Activated T-helper 1 cell treated with anti-CD3 and anti-CD28 coated beads, Interleukin-12 subunit alpha, Interleukin-12 subunit beta, Interleukin-2, Interleukin-4 antibody, amounts not matched to agents 30 ng/mL and 10 ng/mL and 1 ng/mL, durations not matched to agents 14 hours and 24 hours and 36 hours (primary cell): ENCODE measurements at regions of chr12 and their contacts with region 1.

Region 1: GRCh38 chr12:25591144-25591543 is 38.1 kb upstream of the LMNTD1 start:
- DNase-seq: no peak
- H3K4me3 Mint-ChIP-seq: no peak overlapping the region
- H3K27ac Mint-ChIP-seq: peak overlapping the region; percentile 24
- H3K4me1 Mint-ChIP-seq: peaks cover 58% of the 10 kb centered on the region
- H3K27me3 Mint-ChIP-seq: no peaks in the 10 kb centered on the region

Region 2: DNA sequence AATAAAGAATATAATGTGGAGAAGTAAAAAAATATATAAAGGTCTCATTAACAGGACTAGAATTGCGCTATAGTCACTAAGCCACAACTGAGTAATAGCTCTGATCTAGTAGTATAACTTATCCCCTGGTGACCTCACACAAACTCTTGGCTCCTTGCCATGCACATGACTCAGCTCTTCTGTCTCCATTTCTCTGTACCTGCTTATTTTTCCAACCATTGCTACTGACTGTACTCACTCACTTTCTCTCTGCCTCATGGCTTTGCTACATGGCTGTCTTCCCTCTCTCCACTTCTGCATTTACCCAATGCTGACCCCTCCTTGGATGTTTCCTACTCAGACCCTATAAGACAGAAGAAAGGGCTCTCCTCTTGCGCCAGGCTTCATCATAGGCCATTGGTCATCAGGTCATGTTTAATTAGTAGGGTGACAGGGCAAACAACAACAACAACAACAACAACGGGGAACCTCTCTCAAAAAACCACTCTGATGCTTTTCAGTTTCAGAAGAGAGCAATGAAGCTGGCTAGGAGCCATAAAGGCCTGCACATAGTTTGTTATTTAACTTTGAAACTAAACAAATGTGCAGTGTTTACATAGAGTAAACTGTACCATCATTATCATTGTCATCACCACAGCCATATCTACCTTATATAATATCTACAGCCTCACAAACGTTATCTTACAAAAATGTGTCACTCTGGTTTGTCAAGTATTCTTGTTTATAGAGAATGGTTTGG is 314.8 kb before region 1 on chr12:
- intact Hi-C with region 1: no loop called
- DNase-seq: no peak
- H3K4me3 Mint-ChIP-seq: no peak overlapping the region
- H3K27ac Mint-ChIP-seq: peak overlapping the region; percentile 2
- H3K4me1 Mint-ChIP-seq: peaks cover 24% of the 10 kb centered on the region
- H3K27me3 Mint-ChIP-seq: peaks cover 2% of the 10 kb centered on the region

Region 3: DNA sequence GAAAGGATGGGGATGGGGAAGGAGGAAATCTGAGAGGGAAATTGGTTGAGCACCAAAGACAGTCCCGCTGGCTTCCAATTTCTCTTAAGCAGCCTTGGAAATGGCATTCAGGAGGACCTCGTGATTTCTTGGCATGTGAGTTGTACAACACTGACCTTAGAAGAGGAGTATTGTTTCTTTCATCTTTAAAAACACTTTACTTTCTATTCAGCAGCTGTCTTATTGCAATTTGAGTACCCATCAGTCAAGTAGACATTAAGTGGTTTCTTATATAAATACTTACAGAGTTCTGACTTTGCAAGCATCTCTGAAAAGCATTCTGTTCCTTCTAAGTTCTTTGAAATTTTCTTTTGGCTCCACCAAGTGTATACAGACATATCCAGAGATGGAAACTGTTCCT is 121.3 kb before region 1 on chr12:
- intact Hi-C with region 1: no loop called
- DNase-seq: no peak
- H3K4me3 Mint-ChIP-seq: no peak overlapping the region
- H3K27ac Mint-ChIP-seq: no peak overlapping the region
- H3K4me1 Mint-ChIP-seq: no peaks in the 10 kb centered on the region
- H3K27me3 Mint-ChIP-seq: peaks cover 2% of the 10 kb centered on the region

Region 4: DNA sequence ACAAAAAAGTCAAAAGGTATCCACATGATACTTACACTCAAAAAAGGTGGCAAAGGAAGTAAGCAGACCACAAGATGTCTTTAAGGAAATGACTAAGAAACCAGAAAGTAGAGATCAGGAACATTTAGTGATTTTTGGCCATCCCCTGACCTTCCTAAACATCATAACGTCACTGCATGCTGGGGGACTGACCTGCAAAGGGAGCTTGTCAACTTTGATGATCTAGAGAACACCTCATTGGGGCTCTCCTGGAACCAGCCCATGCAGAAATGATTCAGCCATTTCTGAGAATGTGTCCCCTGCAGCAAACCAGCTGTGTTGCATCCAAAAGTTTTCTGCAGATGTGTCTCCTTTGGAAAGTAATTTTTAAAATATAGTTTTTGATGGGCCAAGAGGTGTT is 215.1 kb after region 1 on chr12:
- intact Hi-C with region 1: loop called (anchors 5 kb)
- DNase-seq: peak; percentile 8
- H3K4me3 Mint-ChIP-seq: no peak overlapping the region
- H3K27ac Mint-ChIP-seq: peak overlapping the region; percentile 12
- H3K4me1 Mint-ChIP-seq: peaks cover 38% of the 10 kb centered on the region
- H3K27me3 Mint-ChIP-seq: no peaks in the 10 kb centered on the region

Region 5: GRCh38 chr12:25942709-25943108 is 351.6 kb after region 1 on chr12:
- intact Hi-C with region 1: no loop called
- DNase-seq: no peak
- H3K4me3 Mint-ChIP-seq: no peak overlapping the region
- H3K27ac Mint-ChIP-seq: no peak overlapping the region
- H3K4me1 Mint-ChIP-seq: no peaks in the 10 kb centered on the region
- H3K27me3 Mint-ChIP-seq: peaks cover 1% of the 10 kb centered on the region